ENCODE measurements at regions of chr22 and their contacts with region 1.

Region 1: GRCh38 chr22:48403521-48404403 is 1423.9 kb downstream of the BRD1 start:
- DNase-seq: no peak
- ATAC-seq: no peak
- H3K4me3 Mint-ChIP-seq: no peak overlapping the region
- H3K27ac Mint-ChIP-seq: no peak overlapping the region
- H3K4me1 Mint-ChIP-seq: no peaks in the 10 kb centered on the region
- H3K27me3 Mint-ChIP-seq: peaks cover 5% of the 10 kb centered on the region

Region 2: GRCh38 chr22:48004038-48004437 is 399.7 kb before region 1 on chr22:
- CTCF ChIA-PET with region 1: no interaction called
- POLR2A ChIA-PET with region 1: no interaction called
- intact Hi-C with region 1: no loop called
- DNase-seq: no peak
- ATAC-seq: no peak
- H3K4me3 Mint-ChIP-seq: no peak overlapping the region
- H3K27ac Mint-ChIP-seq: no peak overlapping the region
- H3K4me1 Mint-ChIP-seq: no peaks in the 10 kb centered on the region
- H3K27me3 Mint-ChIP-seq: peaks cover 3% of the 10 kb centered on the region

Region 3: DNA sequence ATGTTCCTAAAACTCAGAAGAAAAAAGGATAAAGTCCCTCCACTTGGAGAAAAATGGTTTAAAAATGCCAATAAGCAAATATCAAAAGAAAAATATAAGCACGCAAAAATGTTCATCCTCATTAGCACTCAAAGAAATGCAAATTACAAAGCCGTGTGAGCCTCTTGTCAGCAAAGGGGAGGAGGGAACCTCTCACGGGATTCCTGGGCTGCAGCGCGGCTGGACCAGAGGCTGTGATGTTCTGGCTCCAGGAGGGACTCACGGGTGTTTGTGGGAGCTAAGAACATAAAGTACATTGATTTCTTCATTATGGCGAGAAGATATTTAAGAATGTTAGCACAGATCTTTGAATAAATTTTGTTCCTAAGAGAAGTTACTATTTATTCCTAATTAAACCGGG is 27.3 kb before region 1 on chr22:
- CTCF ChIA-PET with region 1: no interaction called
- POLR2A ChIA-PET with region 1: no interaction called
- intact Hi-C with region 1: no loop called
- DNase-seq: no peak
- ATAC-seq: no peak
- H3K4me3 Mint-ChIP-seq: no peak overlapping the region
- H3K27ac Mint-ChIP-seq: no peak overlapping the region
- H3K4me1 Mint-ChIP-seq: no peaks in the 10 kb centered on the region
- H3K27me3 Mint-ChIP-seq: peaks cover 13% of the 10 kb centered on the region

Region 4: GRCh38 chr22:48393041-48393370 is 10.8 kb before region 1 on chr22:
- CTCF ChIA-PET with region 1: no interaction called
- POLR2A ChIA-PET with region 1: no interaction called
- intact Hi-C with region 1: no loop called
- DNase-seq: no peak
- ATAC-seq: no peak
- H3K4me3 Mint-ChIP-seq: no peak overlapping the region
- H3K27ac Mint-ChIP-seq: no peak overlapping the region
- H3K4me1 Mint-ChIP-seq: no peaks in the 10 kb centered on the region
- H3K27me3 Mint-ChIP-seq: peaks cover 2% of the 10 kb centered on the region

Region 5: GRCh38 chr22:48438800-48439559 is 35.2 kb after region 1 on chr22:
- CTCF ChIA-PET with region 1: no interaction called
- POLR2A ChIA-PET with region 1: interaction called, 10 read pairs
- intact Hi-C with region 1: no loop called
- DNase-seq: no peak
- ATAC-seq: no peak
- H3K4me3 Mint-ChIP-seq: no peak overlapping the region
- H3K27ac Mint-ChIP-seq: no peak overlapping the region
- H3K4me1 Mint-ChIP-seq: no peaks in the 10 kb centered on the region
- H3K27me3 Mint-ChIP-seq: no peaks in the 10 kb centered on the region

Region 6: DNA sequence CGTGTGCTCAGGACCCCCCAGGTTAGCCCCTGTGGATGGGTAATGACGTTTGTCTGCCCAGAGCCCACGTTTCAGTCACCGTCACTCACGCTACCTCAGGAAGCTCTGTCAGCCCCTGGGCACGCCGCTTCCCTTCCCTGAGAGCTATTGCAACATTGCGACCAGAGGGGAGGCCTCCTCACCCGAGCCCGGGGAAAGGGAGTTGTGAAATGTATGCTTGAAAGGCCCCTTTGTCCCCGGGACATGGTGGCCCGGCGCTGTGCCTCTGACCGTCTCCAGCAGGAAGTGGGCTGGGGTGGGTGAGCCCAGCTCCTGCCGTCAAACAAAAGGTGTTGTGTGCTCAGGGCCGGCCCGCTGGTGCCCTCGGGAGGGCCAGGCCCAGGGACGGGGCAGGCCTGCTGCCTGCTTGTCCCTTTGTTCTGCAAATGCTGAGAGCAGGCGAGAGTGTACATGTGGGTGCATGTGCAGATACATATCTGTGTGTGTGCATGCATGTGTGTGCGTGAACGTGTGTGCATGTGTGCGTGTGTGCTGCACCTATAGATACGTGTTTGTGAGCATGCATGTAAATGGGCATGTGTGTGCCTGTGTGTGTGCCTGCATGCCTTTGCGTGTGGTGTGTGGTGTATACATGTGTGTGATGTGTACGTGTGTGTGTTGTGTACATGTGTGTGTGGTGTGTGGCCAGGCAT is 299.0 kb after region 1 on chr22:
- CTCF ChIA-PET with region 1: no interaction called
- POLR2A ChIA-PET with region 1: no interaction called
- intact Hi-C with region 1: no loop called
- DNase-seq: no peak
- ATAC-seq: no peak
- H3K4me3 Mint-ChIP-seq: no peak overlapping the region
- H3K27ac Mint-ChIP-seq: no peak overlapping the region
- H3K4me1 Mint-ChIP-seq: no peaks in the 10 kb centered on the region
- H3K27me3 Mint-ChIP-seq: no peaks in the 10 kb centered on the region